Activated B cell treated with CpG ODN at 0.5 μM for 24 hours (primary cell): ENCODE measurements at regions of chr15 and their contacts with region 1.

Region 1: DNA sequence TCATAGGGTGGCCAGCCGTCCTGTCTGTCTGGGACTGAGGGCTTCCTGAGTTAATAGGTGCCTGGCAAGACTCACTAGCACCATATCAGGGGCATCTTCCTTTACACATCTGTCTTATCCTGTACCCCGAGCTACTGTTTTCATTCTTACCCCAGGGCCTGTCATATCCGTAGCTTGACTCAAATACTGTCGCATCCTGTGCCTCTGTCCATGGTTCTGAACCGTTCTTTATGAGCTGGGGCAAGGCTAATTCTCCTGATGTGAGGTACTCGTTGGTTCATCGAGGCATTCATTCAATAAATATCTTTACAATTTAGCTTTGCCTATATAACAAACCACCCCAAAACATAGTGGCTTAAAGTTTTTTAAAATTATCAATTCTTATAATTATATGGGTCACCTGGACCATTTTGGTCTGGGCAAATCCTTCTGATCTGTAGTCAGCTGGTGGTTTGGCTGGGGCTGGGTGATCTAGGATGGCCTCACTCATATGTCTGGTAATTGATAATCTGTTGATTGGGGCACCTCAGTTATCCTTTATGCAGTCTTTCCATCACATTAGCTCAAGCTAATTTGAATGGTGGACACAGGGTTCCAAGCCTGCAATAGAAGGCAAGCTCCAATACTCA is 121.2 kb downstream of the TLE3 start:
- DNase-seq: no peak
- ATAC-seq: no peak
- H3K4me3 Mint-ChIP-seq: no peak overlapping the region
- H3K27ac Mint-ChIP-seq: peak overlapping the region; percentile 25
- H3K4me1 Mint-ChIP-seq: peaks cover 28% of the 10 kb centered on the region
- H3K27me3 Mint-ChIP-seq: peaks cover 33% of the 10 kb centered on the region
- CTCF ChIP-seq: no peak

Region 2: DNA sequence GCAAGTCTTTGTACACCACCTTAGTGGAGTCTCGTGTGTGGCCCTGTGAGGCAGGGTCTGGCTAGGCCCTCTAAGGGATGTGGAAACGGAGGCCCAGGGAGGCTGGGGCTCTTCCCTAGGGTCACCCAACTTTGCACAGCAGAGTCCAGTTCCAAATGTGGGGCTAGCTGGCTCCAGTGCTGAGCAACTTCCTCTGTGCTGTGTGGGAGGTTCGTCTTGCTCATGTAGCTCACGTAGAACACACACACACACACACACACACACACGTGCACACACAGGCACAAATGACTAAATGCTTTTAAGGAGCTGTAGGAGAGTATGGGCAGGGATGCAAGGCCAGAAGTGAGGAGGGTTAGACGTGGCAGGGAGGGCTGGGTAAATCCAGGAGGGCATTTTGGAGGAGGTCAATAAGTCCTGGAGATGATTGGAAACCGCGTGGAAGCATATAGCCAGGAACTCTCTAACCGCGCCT is 310.0 kb before region 1 on chr15:
- CTCF ChIA-PET with region 1: no interaction called
- POLR2A ChIA-PET with region 1: interaction called, 3 read pairs
- intact Hi-C with region 1: loop called (anchors 5 kb)
- DNase-seq: no peak
- ATAC-seq: peak; percentile 51
- H3K4me3 Mint-ChIP-seq: peak overlapping the region; percentile 36
- H3K27ac Mint-ChIP-seq: peak overlapping the region; percentile 67
- H3K4me1 Mint-ChIP-seq: peaks cover 55% of the 10 kb centered on the region
- H3K27me3 Mint-ChIP-seq: peaks cover 6% of the 10 kb centered on the region
- CTCF ChIP-seq: no peak

Region 3: DNA sequence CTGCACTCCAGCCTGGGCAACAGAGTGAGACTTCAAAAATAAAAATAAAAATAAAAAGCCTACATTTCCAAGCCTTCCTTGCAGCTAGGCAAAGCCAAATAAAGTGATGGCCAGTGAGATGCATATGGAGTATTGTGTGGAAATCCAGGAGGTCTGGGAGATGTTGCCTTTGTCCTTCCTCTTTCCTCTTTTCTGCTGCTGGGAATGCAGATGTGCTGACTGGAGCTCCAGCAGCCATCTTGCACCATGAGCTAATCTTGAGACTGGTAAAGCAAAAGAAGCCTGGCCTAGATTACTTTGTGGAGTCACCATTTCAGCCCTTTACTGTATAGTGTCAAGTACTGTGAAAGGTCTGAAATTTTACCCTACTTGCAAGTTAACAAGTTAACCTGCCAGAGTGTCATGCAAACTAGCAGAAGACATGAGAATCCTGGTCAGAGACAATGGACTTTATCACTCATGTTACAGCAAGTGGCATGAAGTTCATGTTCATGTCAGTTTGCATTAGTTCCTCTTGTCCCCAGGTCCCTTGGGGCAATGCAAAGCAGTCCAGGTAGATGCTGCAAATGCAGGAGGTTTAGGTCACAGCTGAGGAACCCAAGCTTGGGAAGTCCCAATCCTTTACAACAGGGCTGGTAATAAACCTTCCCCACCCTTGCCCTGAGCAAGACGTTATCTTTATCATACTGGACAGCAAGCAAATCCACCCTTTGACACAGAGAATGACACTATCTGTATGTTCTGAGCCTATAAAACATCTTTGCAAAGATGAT is 18.1 kb after region 1 on chr15:
- CTCF ChIA-PET with region 1: no interaction called
- POLR2A ChIA-PET with region 1: interaction called, 5 read pairs
- intact Hi-C with region 1: loop called (anchors 1 kb)
- DNase-seq: no peak
- ATAC-seq: peak; percentile 81
- H3K4me3 Mint-ChIP-seq: peak overlapping the region; percentile 0
- H3K27ac Mint-ChIP-seq: peak overlapping the region; percentile 57
- H3K4me1 Mint-ChIP-seq: peaks cover 85% of the 10 kb centered on the region
- H3K27me3 Mint-ChIP-seq: no peaks in the 10 kb centered on the region
- CTCF ChIP-seq: no peak

Region 4: DNA sequence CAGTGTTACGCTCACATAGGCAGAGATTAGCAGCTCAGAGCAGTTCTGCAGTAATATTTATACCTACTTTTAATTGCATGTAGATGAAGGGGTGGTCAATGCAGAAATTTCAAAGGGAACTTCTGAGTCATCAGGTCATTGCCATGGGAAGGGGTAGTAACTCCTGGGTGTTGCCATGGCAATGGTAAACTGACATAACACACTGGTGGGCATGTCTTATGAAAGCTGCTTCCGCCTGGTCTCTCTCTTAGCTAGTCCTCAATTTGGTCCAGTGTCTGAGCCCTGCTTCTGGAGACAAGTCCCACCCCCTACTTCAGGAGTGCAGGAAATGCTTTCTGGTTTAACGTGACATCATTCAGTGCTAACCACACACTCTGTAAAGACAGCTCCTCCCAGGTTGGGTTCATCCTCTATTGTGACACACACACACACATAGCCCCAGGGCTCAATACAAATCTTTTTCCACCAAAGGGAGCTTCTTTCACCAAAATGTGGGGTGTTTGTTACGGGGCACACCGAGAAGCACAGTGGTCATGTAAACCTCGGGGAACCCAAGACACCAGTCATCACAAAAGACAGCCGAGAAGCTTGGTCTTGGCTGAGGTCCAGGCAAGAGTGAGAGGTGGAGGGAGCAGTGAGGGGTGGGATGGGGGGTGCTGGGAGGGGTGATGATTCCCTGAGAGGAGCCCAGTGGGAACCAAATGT is 46.7 kb after region 1 on chr15:
- CTCF ChIA-PET with region 1: interaction called, 5 read pairs
- POLR2A ChIA-PET with region 1: interaction called, 10 read pairs
- intact Hi-C with region 1: no loop called
- DNase-seq: no peak
- ATAC-seq: peak; percentile 76
- H3K4me3 Mint-ChIP-seq: peak overlapping the region; percentile 21
- H3K27ac Mint-ChIP-seq: peak overlapping the region; percentile 75
- H3K4me1 Mint-ChIP-seq: peaks cover 46% of the 10 kb centered on the region
- H3K27me3 Mint-ChIP-seq: peaks cover 2% of the 10 kb centered on the region
- CTCF ChIP-seq: no peak

Region 5: GRCh38 chr15:70071799-70072198 is 95.3 kb after region 1 on chr15:
- CTCF ChIA-PET with region 1: no interaction called
- POLR2A ChIA-PET with region 1: no interaction called
- intact Hi-C with region 1: loop called (anchors 1 kb)
- DNase-seq: no peak
- ATAC-seq: peak; percentile 59
- H3K4me3 Mint-ChIP-seq: no peak overlapping the region
- H3K27ac Mint-ChIP-seq: peak overlapping the region; percentile 56
- H3K4me1 Mint-ChIP-seq: peaks cover 50% of the 10 kb centered on the region
- H3K27me3 Mint-ChIP-seq: no peaks in the 10 kb centered on the region
- CTCF ChIP-seq: no peak

Region 6: GRCh38 chr15:70459312-70459875 is 482.9 kb after region 1 on chr15:
- CTCF ChIA-PET with region 1: no interaction called
- POLR2A ChIA-PET with region 1: no interaction called
- intact Hi-C with region 1: loop called (anchors 2 kb)
- DNase-seq: no peak
- ATAC-seq: no peak
- H3K4me3 Mint-ChIP-seq: no peak overlapping the region
- H3K27ac Mint-ChIP-seq: no peak overlapping the region
- H3K4me1 Mint-ChIP-seq: peaks cover 29% of the 10 kb centered on the region
- H3K27me3 Mint-ChIP-seq: no peaks in the 10 kb centered on the region
- CTCF ChIP-seq: no peak